Left ventricle myocardium superior (tissue), 1 donor: ENCODE measurements at regions of chr9 and their contacts with region 1.

Region 1: GRCh38 chr9:72271613-72272478 is 93.2 kb downstream of the ZFAND5 start:
- DNase-seq: no peak
- ATAC-seq: peak; percentile 65

Region 2: DNA sequence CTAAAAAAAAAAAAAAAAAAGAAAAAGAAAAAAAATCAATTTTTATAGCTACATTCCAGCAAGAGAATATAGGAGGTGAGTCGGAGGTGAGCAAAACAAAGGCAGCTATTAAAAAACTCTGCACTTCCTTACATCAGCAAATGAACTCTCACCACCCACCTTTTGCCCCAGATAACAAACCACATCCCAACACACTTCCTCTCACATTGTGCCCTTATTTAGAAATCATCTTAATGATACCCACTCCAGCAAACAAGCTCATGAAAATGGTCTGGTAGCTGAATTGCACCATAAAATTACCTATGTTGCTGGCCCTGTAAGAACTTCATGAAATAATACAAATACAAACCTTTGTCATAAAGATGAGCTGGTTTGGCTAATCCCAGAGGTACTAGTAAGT is 586.5 kb before region 1 on chr9:
- intact Hi-C with region 1: no loop called
- DNase-seq: no peak
- ATAC-seq: no peak

Region 3: GRCh38 chr9:72038890-72039410 is 232.9 kb before region 1 on chr9:
- intact Hi-C with region 1: loop called (anchors 1 kb)
- DNase-seq: peak; percentile 68
- ATAC-seq: peak; percentile 85

Region 4: DNA sequence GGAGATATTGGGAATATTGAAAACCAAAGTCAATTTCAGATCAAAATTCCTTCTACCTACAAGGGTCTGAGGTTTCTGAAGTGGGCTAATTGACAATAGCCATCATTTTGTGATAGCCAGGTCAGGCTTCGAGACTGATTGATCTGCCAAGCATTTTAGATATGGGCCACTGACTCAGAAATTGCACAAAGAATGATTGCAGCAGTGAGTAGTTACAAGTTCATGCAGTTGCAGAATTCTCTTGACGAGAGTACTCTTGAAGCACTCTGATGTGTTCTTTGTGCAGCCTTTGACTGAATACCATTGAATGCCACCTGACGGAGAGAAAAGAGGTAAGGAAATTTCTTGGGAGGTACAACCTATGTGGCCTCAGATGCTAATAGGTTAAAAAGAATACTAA is 219.7 kb before region 1 on chr9:
- intact Hi-C with region 1: no loop called
- DNase-seq: no peak
- ATAC-seq: no peak

Region 5: DNA sequence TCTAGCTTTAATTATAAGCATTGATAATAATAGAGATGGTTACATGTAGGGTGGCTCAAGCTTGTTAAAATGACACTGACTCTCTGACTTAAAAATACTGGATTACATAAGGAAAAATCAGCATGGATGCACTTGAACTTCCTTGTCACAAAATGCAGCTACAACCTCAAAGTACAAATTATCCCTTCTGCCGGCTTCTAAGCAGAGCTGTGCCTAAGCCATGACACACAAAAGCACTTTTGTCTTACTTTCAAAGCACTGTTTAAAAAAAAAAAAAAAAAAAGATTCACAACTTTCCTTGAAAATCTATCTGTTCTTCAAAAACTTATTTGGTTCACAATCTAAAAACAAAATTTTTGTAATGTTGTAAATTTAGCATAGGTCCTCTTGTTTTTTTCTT is 129.6 kb after region 1 on chr9:
- intact Hi-C with region 1: no loop called
- DNase-seq: no peak
- ATAC-seq: no peak